Endothelial cell of umbilical vein (primary cell): ENCODE measurements at regions of chr22 and their contacts with region 1.

Region 1: GRCh38 chr22:41557401-41558240 is 3.2 kb upstream of the CSDC2 start:
- DNase-seq: peak; percentile 64
- H3K4me3 ChIP-seq: no peak overlapping the region
- H3K27ac ChIP-seq: no peak overlapping the region
- H3K4me1 ChIP-seq: no peaks in the 10 kb centered on the region
- H3K27me3 ChIP-seq: peaks cover 0 to 8% of the 10 kb centered on the region in 2 experiments
- CTCF ChIP-seq: no peak
- POLR2A ChIP-seq: no peak

Region 2: DNA sequence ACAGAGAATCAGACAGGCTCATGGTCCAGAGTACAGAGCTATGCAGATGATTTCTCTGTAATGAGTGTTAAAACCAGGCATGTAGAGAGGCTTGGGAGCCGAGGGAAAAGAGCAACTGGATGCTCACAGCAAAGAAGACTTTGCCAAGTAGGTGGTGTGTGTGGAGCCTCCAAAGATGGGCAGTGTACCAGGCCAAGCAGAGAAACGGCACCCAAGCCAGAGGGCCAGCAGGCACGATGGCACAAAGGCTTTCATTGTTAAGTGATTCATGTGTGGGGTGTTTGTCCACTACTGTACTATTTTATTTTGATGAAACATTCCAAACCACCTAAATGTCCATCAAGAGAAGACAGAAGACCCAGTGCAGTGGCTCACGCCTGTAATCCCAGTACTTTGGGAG is 282.8 kb before region 1 on chr22:
- CTCF ChIA-PET with region 1: no interaction called
- POLR2A ChIA-PET with region 1: no interaction called
- dilution Hi-C with region 1: no loop called
- intact Hi-C with region 1: no loop called
- DNase-seq: no peak
- H3K4me3 ChIP-seq: no peak overlapping the region
- H3K27ac ChIP-seq: no peak overlapping the region
- H3K4me1 ChIP-seq: no peaks in the 10 kb centered on the region
- H3K27me3 ChIP-seq: no peaks in the 10 kb centered on the region
- CTCF ChIP-seq: no peak
- POLR2A ChIP-seq: no peak

Region 3: DNA sequence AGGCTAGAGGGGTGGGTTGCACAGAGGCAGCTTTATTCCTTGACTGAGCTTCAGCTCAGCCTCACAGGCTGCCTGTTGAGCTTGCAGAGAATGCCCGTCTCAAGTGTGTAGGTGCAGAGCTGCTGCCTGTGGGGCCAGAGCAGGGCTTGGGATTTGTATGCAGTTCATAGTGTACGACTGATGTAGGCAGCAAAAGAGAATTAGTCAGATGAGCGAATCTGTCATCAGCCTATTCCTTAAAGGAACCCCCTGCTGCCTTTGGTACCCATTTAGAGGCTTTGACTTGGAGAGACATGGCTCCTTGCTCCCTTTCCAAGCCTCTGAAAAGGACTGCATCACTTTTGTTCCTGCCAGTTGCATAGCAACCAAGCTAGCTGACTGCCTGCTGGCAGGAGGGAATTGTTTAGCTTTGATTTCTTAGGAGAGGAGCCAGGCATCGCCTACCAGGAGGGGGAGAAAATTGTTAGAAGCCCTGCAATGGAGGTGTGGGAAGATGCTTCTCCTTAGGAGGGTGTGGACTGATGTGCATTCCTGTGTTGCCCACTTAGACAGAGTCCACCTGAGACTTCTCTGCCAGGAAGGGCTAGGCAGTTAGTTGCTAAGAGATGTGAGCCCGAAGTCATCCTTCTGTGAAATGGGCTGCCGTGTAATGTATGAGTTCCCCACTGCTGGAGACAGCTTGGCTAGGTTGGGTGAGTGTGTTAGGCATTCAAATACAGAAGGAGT is 77.8 kb before region 1 on chr22:
- CTCF ChIA-PET with region 1: no interaction called
- POLR2A ChIA-PET with region 1: no interaction called
- dilution Hi-C with region 1: no loop called
- intact Hi-C with region 1: no loop called
- DNase-seq: no peak
- H3K4me3 ChIP-seq: no peak overlapping the region
- H3K27ac ChIP-seq: no peak overlapping the region
- H3K4me1 ChIP-seq: no peaks in the 10 kb centered on the region
- H3K27me3 ChIP-seq: no peaks in the 10 kb centered on the region
- CTCF ChIP-seq: no peak
- POLR2A ChIP-seq: no peak

Region 4: DNA sequence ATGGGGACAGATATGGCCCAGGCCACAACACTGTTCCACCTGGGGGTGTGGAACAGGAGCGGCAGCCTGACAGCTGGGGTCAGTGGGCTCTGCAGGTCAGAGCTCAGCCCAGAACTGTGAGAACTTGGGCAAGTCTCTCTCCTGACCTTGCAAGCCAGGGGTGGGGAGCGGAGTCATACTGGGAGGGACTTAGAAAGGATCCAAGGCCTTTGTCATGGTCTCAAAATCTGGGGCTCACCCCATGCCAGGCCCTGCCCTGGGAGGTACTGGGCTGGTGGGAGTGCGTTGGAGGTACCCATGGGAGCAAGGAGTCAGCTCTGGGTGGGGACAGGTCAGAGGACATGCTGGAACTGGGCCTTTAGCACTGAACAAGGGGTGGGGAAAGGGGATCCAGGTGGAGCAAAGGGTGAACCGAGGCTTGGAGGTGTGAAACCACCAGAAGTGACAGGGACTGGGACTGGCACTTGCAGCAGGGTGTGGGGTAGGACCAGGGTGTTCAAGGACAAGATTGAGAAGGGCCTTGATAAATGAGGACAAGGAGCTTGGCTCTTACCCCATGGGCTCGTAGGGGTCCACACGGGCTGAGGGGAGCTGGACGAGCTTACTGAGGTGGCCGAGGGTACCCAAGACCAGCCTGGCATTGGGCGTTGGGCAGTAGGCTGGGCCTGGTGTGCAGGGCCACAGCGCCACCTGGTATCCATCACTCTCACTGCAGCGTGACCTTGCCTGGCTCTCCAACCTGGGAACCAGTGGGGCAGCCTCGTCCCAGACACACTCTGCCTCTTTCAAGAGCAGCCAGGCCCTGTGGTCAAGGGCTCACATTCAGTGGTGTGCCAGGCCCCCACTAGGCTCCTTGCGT is 39.4 kb after region 1 on chr22:
- CTCF ChIA-PET with region 1: interaction called, 10 read pairs
- POLR2A ChIA-PET with region 1: no interaction called
- dilution Hi-C with region 1: no loop called
- intact Hi-C with region 1: no loop called
- DNase-seq: peak; percentile 48
- H3K4me3 ChIP-seq: no peak overlapping the region
- H3K27ac ChIP-seq: no peak overlapping the region
- H3K4me1 ChIP-seq: peaks cover 15% of the 10 kb centered on the region
- H3K27me3 ChIP-seq: no peaks in the 10 kb centered on the region
- CTCF ChIP-seq: peak; percentile 73 to 88
- POLR2A ChIP-seq: no peak